ENCODE measurements at regions of chr1 and their contacts with region 1.

Region 1: DNA sequence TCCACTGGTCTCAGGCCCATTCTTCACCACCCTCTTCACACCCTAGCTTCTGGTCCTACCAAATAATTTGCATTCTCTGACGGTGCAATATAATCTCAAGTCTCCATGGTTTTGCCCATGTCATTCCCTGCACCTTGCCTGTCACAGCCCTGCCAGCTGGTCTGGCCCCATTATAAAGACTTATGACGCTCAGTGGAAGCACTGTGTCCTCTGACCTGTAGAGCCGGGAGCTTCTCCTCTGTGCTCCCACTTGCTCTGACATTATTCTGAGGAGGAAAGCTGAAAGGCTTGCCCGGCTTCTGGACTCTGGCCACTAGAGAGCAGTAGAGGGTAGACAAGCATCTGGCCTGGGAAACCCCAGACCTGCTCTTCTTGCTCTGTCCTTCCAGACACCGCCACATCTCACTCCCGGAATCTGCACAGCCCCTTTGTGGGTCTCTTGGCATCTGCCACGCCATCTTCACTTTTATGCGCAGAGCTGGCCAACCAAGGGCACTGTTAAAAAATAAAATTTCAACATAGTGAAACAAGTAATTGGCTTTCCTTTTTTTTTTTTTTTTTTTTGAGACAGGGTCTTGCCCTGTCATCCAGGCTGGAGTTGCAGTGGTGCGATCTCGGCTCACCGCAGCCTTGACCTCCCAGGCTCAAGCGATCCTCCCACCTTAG is 44.4 kb downstream of the NENF start:
- DNase-seq: peak; percentile 84 to 94
- H3K4me3 ChIP-seq: no peak overlapping the region
- H3K27ac ChIP-seq: no peak overlapping the region
- H3K4me1 ChIP-seq: peaks cover 0 to 12% (median 4%) of the 10 kb centered on the region in 4 donors
- H3K27me3 ChIP-seq: peaks cover 0 to 9% (median 0%) of the 10 kb centered on the region in 3 donors
- CTCF ChIP-seq: peak in 5 of 7 experiments; percentile 66 to 90 (median 78)
- EP300 ChIP-seq: no peak
- POLR2A ChIP-seq: no peak

Region 2: GRCh38 chr1:212525479-212526110 is 48.4 kb after region 1 on chr1:
- intact Hi-C with region 1: no loop called
- DNase-seq: no peak
- H3K4me3 ChIP-seq: no peak overlapping the region
- H3K27ac ChIP-seq: no peak overlapping the region
- H3K4me1 ChIP-seq: no peaks in the 10 kb centered on the region
- H3K27me3 ChIP-seq: peaks cover 0 to 11% (median 0%) of the 10 kb centered on the region in 3 donors
- CTCF ChIP-seq: no peak
- EP300 ChIP-seq: no peak
- POLR2A ChIP-seq: no peak

Region 3: DNA sequence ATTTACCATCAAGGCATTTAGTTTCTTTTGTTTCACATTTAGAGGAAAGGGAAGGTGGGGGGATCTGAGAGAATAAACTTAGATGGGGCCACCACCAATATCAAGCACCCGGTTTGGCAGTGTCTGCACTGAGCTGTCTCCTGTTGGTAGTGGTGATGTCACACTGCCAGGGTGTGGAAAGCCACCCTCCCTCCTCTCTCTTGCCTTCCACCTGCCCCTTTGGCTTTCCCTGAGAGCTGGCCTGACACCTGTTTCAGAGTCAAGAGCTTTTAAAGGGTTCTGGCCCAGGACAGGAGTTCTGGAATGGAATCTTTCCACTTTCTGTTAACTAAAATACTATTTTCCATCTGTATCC is 144.8 kb after region 1 on chr1:
- intact Hi-C with region 1: loop called (anchors 10 kb)
- DNase-seq: no peak
- H3K4me3 ChIP-seq: no peak overlapping the region
- H3K27ac ChIP-seq: no peak overlapping the region
- H3K4me1 ChIP-seq: no peaks in the 10 kb centered on the region
- H3K27me3 ChIP-seq: no peaks in the 10 kb centered on the region
- CTCF ChIP-seq: no peak
- EP300 ChIP-seq: no peak
- POLR2A ChIP-seq: no peak